Psoas muscle (tissue), 8 donors: ENCODE measurements at regions of chr3 and their contacts with region 1.

Region 1: DNA sequence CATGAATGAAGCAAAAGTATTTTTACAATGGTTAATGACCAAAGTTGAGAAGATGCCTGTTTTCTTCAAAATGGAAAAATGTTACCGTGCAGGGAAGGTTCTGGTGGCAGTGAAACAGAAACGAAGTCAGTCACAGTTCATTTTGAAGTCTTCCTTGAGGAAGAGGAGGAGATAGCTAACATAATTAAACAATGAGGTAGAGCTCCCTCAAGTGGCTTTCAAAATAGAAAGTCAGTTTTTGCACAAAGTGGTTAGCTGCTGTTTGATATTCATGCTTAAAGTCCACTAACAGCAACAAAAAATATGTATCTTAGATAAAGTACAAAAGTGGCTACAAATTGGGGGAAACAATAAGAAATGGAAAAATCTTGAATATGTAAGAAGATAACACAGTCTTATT is 87.3 kb downstream of the TFG start:
- DNase-seq: no peak
- ATAC-seq: peak in 1 of 4 donors; percentile 68
- H3K4me3 ChIP-seq: no peak overlapping the region
- H3K27ac ChIP-seq: no peak overlapping the region
- H3K4me1 ChIP-seq: no peaks in the 10 kb centered on the region
- H3K27me3 ChIP-seq: no peaks in the 10 kb centered on the region
- CTCF ChIP-seq: peak; percentile 37

Region 2: DNA sequence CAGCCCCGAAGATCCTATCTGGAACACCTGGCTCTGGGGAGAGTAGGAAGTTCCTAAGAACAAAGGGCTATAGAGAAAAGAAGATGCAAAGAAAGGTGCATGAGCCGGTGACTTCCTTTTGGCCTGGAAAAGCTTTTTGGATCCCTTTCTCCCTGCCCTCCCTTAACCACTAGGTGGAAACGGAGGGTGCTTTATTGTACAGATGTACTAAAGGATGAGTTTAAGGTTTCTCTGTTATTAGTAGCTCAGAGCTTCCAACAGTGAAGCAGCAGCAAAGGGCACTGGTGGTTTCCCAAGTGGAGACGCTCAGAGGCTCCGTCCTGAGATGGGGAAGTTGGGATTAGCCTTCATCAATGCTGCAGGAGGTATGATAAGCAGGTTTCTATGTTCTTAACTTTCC is 193.1 kb before region 1 on chr3:
- intact Hi-C with region 1: loop called in 1 of 2 experiments (anchors 5 kb)
- DNase-seq: no peak
- ATAC-seq: no peak
- H3K4me3 ChIP-seq: no peak overlapping the region
- H3K27ac ChIP-seq: no peak overlapping the region
- H3K4me1 ChIP-seq: no peaks in the 10 kb centered on the region
- H3K27me3 ChIP-seq: no peaks in the 10 kb centered on the region
- CTCF ChIP-seq: peak; percentile 9